ENCODE measurements at regions of chr5 and their contacts with region 1.

Region 1: GRCh38 chr5:133423618-133424282 is 188.6 kb downstream of the FSTL4 start:
- DNase-seq: peak; percentile 75
- ATAC-seq: peak; percentile 94
- H3K4me3 Mint-ChIP-seq: no peak overlapping the region
- H3K27ac Mint-ChIP-seq: peak overlapping the region; percentile 19
- H3K4me1 Mint-ChIP-seq: peaks cover 10% of the 10 kb centered on the region
- H3K27me3 Mint-ChIP-seq: peaks cover 3% of the 10 kb centered on the region
- CTCF ChIP-seq: peak; percentile 81

Region 2: GRCh38 chr5:133006653-133007052 is 417.1 kb before region 1 on chr5:
- CTCF ChIA-PET with region 1: no interaction called
- POLR2A ChIA-PET with region 1: no interaction called
- intact Hi-C with region 1: no loop called
- DNase-seq: no peak
- ATAC-seq: no peak
- H3K4me3 Mint-ChIP-seq: no peak overlapping the region
- H3K27ac Mint-ChIP-seq: no peak overlapping the region
- H3K4me1 Mint-ChIP-seq: peaks cover 8% of the 10 kb centered on the region
- H3K27me3 Mint-ChIP-seq: no peaks in the 10 kb centered on the region
- CTCF ChIP-seq: no peak

Region 3: GRCh38 chr5:133398646-133399101 is 25.1 kb before region 1 on chr5:
- CTCF ChIA-PET with region 1: interaction called, 21 read pairs
- POLR2A ChIA-PET with region 1: interaction called, 18 read pairs
- intact Hi-C with region 1: loop called (anchors 1 kb)
- DNase-seq: no peak
- ATAC-seq: peak; percentile 88
- H3K4me3 Mint-ChIP-seq: peak overlapping the region; percentile 59
- H3K27ac Mint-ChIP-seq: peak overlapping the region; percentile 94
- H3K4me1 Mint-ChIP-seq: peaks cover 48% of the 10 kb centered on the region
- H3K27me3 Mint-ChIP-seq: no peaks in the 10 kb centered on the region
- CTCF ChIP-seq: no peak

Region 4: GRCh38 chr5:133460172-133460758 is 36.5 kb after region 1 on chr5:
- CTCF ChIA-PET with region 1: interaction called, 4 read pairs
- POLR2A ChIA-PET with region 1: no interaction called
- intact Hi-C with region 1: loop called (anchors 1 kb)
- DNase-seq: peak; percentile 31
- ATAC-seq: no peak
- H3K4me3 Mint-ChIP-seq: no peak overlapping the region
- H3K27ac Mint-ChIP-seq: no peak overlapping the region
- H3K4me1 Mint-ChIP-seq: no peaks in the 10 kb centered on the region
- H3K27me3 Mint-ChIP-seq: no peaks in the 10 kb centered on the region
- CTCF ChIP-seq: no peak

Measured in activated B cell treated with CpG ODN at 0.5 μM for 24 hours (primary cell).